ENCODE measurements at regions of chr9 and their contacts with region 1.

Region 1: DNA sequence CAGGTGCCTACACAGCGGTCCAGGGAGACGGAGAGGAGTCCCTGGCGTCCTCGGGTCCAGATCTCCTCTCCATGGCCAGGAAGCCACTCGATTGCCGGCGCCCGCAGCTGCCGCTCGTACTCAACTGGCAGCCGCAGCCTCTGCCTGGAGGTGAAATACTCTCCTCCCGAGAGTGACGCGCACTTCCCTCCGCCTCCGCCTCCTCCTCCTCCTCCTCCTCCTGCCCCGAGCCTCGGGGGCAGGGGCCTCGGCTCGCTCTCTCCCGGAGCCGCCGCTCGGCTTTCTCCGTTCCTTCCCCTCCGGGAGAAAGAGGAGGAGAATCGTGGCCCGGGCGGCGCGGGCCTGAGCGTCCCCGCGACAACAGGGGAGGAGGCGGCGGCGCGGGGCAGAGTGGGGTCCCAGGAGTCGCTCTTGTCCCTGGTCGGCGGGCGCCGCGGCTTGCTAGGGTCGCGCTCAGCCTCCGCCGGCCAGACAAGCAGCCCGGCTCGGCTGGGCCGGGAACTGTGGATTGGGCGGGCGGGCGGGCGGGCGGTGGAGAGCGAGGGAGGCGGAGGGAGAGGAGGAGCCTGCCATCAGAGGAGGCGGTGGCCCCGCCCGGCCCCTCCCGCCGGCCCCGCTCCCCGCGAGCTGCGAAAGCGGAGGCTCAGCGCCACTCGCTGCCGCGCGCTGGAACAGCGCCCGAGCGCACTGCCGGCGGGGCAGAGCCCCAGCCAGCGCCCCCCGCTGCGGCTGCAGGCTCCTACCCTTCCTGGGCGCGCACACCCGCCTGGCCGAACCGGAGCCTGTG is at the start of gene CEMIP2:
- DNase-seq: peak; percentile 96
- H3K4me3 Mint-ChIP-seq: peak within 1 kb of the TSS; percentile 92
- H3K27ac Mint-ChIP-seq: peak within 1 kb of the TSS; percentile 93
- H3K4me1 Mint-ChIP-seq: peaks cover 35% of the 10 kb centered on the region
- H3K27me3 Mint-ChIP-seq: no peaks in the 10 kb centered on the region
- total RNA-seq, gene CEMIP2: 47.7 and 55.1 TPM in 2 replicates

Region 2: DNA sequence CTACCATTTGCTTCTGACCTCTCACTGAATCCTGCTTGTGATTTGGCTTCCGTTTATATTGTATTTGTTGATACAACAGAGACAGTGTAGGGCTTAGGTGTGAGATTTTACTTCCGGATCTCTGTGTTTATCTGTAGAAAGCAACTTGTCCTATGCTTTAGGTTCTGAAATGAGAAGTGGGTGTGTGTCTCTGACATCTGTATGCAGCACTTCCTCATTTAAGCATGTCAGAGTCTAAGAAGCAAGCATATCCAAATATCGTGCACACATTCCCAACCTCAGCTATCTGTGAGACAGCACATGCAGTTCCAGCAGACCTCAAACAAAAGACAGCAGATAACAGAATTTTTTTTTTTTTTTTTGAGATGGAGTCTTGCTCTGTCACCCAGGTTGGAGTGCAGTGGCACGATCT is 1370.4 kb before region 1 on chr9:
- intact Hi-C with region 1: loop called (anchors 5 kb)
- DNase-seq: peak; percentile 75
- H3K4me3 Mint-ChIP-seq: peak overlapping the region; percentile 58
- H3K27ac Mint-ChIP-seq: peak overlapping the region; percentile 52
- H3K4me1 Mint-ChIP-seq: peaks cover 38% of the 10 kb centered on the region
- H3K27me3 Mint-ChIP-seq: no peaks in the 10 kb centered on the region

Region 3: DNA sequence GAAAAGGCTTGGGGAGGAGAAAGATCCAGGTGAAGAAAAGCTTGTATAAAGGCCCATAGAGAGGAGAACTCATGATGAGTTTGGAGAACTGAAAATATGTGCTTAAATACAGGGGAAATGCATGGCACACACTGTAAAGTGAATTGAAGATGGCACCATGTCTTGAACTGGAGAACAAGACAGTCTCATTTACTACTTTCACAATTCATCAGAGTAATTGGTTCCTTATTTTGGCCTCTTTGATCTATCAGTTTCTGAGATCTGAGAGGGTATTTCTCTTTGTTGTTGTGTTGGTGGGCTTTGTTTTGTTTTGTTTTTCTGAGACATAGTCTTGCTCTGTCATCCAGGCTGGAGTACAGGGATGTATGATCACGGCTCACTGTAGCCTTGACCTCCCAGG is 98.5 kb before region 1 on chr9:
- intact Hi-C with region 1: no loop called
- DNase-seq: no peak
- H3K4me3 Mint-ChIP-seq: no peak overlapping the region
- H3K27ac Mint-ChIP-seq: no peak overlapping the region
- H3K4me1 Mint-ChIP-seq: no peaks in the 10 kb centered on the region
- H3K27me3 Mint-ChIP-seq: peaks cover 7% of the 10 kb centered on the region

Region 4: GRCh38 chr9:71683598-71684235 is 84.9 kb before region 1 on chr9:
- intact Hi-C with region 1: loop called (anchors 5 kb)
- DNase-seq: no peak
- H3K4me3 Mint-ChIP-seq: peak overlapping the region; percentile 65
- H3K27ac Mint-ChIP-seq: peak overlapping the region; percentile 69
- H3K4me1 Mint-ChIP-seq: peaks cover 30% of the 10 kb centered on the region
- H3K27me3 Mint-ChIP-seq: no peaks in the 10 kb centered on the region

Region 5: GRCh38 chr9:71752928-71753327 is 15.7 kb before region 1 on chr9:
- intact Hi-C with region 1: loop called (anchors 2 kb)
- DNase-seq: no peak
- H3K4me3 Mint-ChIP-seq: no peak overlapping the region
- H3K27ac Mint-ChIP-seq: no peak overlapping the region
- H3K4me1 Mint-ChIP-seq: peaks cover 29% of the 10 kb centered on the region
- H3K27me3 Mint-ChIP-seq: no peaks in the 10 kb centered on the region

Region 6: GRCh38 chr9:71911253-71912074 is 142.9 kb after region 1 on chr9 and contains the start of gene C9orf85:
- intact Hi-C with region 1: loop called (anchors 1 kb)
- DNase-seq: peak; percentile 99
- H3K4me3 Mint-ChIP-seq: peak within 1 kb of the TSS; percentile 100
- H3K27ac Mint-ChIP-seq: peak within 1 kb of the TSS; percentile 99
- H3K4me1 Mint-ChIP-seq: peaks cover 56% of the 10 kb centered on the region
- H3K27me3 Mint-ChIP-seq: no peaks in the 10 kb centered on the region
- total RNA-seq, gene C9orf85: 9.4 and 11.6 TPM in 2 replicates

Region 7: DNA sequence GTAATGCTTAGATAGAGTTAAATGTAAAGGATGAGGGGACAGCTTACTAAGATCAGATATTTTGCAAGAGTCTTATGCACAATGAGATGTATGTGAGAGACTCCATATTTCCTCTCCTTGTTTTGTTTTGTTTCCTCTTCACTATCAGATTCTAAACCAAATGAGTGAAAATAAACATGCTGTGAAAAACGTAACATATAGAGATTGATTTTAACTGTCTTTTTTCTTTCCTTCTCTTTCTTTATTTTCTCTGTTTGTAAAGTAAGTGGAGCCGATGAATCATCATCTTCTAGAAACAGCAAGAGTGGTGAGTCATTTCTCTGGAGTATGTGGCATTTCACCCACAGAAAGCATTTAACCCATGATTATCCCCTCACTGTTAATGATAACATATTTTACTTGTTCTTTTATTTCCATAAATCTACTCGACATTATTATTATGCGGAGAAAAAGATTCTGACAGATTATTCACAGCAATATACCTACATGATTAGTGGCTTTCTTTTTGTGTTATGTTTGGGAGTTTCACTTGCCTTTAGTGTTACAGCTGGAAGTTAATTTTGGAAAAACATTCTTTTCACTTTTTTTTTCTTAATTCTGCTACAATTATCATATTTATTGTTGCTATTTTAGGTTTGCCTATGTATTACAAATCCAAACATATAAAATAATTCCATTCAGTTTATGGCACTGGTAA is 1380.9 kb after region 1 on chr9:
- intact Hi-C with region 1: loop called (anchors 10 kb)
- DNase-seq: peak; percentile 76
- H3K4me3 Mint-ChIP-seq: peak overlapping the region; percentile 65
- H3K27ac Mint-ChIP-seq: peak overlapping the region; percentile 89
- H3K4me1 Mint-ChIP-seq: peaks cover 54% of the 10 kb centered on the region
- H3K27me3 Mint-ChIP-seq: no peaks in the 10 kb centered on the region

Measured in activated CD4-positive, alpha-beta T cell treated with anti-CD3 and anti-CD28 coated beads, Interleukin-2, amount 10 ng/mL, durations not matched to agents 24 days and 14 days (primary cell).